ENCODE measurements at regions of chr2 and their contacts with region 1.

Region 1: DNA sequence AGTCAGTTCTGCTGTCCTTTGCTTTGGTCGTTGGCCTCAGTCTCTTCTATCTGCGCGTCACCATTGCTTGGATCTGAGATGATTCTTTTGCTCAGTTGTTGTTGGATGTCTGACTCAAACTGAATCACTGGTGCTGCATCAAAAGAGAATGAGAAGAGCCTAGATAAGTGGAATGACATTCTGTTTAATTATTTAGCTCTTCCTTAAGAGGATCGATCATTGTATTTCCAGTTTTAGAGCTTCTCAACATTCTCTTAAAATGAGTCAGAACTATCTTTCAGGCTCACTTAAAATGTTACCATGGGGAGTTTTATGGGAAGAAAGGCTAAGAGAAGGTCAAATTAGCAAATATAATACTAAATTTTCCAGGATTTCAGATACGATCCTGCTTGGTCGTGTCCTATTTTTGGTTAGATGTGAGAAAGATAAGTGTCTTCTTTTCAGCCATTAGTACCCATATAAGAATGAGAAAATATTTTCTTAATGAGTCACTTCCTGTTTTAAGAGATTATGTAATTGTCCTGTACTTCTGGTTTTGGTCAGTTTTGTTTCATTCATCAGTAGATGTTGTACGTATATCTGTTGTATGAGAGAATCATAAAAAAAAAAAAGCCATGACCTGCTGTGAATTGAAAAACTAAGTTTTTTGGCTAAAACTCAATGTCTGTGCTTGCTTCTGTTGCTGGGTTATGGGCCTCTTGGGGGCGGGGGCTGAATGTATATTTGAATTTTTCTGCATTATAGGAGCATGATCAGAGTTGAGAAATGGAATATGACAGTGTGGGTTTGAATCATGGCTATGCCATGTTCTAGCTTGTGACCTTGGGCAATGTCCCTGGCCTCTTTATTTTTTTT is 31.6 kb upstream of the CASP10 start:
- DNase-seq: peak; percentile 84
- H3K4me3 ChIP-seq: no peak overlapping the region
- H3K27ac ChIP-seq: peak overlapping the region; percentile 84
- H3K4me1 ChIP-seq: peaks cover 47% of the 10 kb centered on the region
- H3K27me3 ChIP-seq: no peaks in the 10 kb centered on the region
- CTCF ChIP-seq: no peak
- POLR2A ChIP-seq: peak; percentile 4

Region 2: DNA sequence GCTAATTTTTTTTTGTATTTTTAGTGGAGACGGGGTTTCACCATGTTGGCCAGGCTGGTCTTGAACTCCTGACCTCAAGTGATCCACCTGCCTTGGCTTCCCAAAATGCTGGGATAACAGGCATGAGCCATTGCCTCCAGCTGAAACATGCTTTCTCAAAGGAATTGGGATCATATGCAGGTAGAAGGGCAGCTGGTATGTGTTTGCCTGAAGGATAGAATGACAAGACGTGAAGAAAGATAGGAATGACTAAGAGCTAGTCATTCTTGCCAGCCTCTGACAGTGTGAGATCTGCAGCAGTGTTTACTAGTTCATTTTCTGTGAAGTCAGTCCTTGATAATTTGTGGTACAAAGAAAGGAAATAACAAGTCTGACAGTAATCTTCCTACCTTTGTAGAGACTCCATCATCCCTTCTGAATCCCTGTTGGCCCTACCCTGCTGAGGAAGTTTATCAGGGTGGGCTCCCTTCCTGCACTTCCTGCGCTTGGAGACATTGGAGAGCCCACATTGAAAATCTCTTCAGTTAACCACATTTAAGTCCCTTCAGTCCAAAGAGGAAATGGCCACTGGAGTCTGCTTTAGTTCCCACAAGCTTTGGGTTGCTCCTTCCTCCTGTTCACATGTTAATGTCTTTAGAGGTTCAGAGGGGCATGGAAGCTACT is 20.7 kb before region 1 on chr2:
- CTCF ChIA-PET with region 1: interaction called, 10 read pairs
- POLR2A ChIA-PET with region 1: interaction called, 5 read pairs
- dilution Hi-C with region 1: no loop called
- intact Hi-C with region 1: loop called (anchors 1 kb)
- DNase-seq: peak; percentile 98
- H3K4me3 ChIP-seq: peak overlapping the region in 2 of 3 experiments; percentile 8 to 53
- H3K27ac ChIP-seq: peak overlapping the region; percentile 99
- H3K4me1 ChIP-seq: peaks cover 81% of the 10 kb centered on the region
- H3K27me3 ChIP-seq: no peaks in the 10 kb centered on the region
- CTCF ChIP-seq: no peak
- POLR2A ChIP-seq: peak; percentile 85

Measured in endothelial cell of umbilical vein (primary cell).